HEK293T (cell line): ENCODE measurements at regions of chr2 and their contacts with region 1.

Region 1: GRCh38 chr2:119476301-119477021 is 44.8 kb downstream of the TMEM37 start:
- DNase-seq: peak; percentile 86

Region 2: GRCh38 chr2:119409506-119409905 is 67.0 kb before region 1 on chr2:
- CTCF ChIA-PET with region 1: interaction called, 12 read pairs
- POLR2A ChIA-PET with region 1: no interaction called
- DNase-seq: no peak

Region 3: DNA sequence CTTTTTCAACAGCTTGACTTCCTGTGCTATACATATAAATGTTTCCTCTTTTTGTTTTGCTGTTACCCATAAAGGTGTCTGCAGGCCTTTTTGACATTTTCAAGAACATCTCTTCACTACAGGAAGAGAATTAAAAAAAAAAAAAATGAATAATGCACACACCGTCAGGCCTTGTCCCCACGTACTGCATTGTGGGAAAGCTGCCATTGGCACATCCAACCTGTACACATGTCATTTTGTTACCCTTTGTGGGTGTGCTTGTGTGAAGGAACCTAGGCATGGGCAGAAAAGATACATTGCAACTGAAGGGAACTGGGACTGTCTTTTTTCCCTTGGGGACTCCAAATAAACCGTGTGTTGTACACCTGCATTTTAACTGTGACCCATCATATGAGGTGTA is 61.6 kb before region 1 on chr2:
- CTCF ChIA-PET with region 1: interaction called, 12 read pairs
- POLR2A ChIA-PET with region 1: no interaction called
- DNase-seq: no peak